OCI-LY7 (cell line): ENCODE measurements at regions of chr1 and their contacts with region 1.

Region 1: GRCh38 chr1:107389410-107390396 is 248.9 kb downstream of the NTNG1 start:
- DNase-seq: peak; percentile 35
- H3K4me3 ChIP-seq: no peak overlapping the region
- H3K27ac ChIP-seq: no peak overlapping the region
- H3K4me1 ChIP-seq: peaks cover 19% of the 10 kb centered on the region
- CTCF ChIP-seq: no peak

Region 2: DNA sequence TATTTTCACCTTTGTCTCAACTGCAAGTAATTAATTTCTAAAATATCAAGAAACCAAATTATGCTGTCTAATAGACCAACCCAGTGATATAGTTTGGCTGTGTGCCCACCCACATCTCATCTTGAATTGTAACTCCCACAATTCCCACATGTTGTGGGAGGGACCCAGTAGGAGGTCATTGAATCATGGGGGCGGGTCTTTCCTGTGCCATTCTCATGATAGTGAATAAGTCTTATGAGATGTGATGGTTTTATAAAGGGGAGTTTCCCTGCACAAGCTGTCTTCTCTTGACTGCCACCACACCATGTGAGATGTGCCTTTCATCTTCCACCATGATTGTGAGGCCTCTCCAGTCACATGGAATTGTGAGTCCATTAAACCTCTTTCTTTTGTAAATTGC is 296.3 kb before region 1 on chr1:
- CTCF ChIA-PET with region 1: no interaction called
- POLR2A ChIA-PET with region 1: no interaction called
- intact Hi-C with region 1: no loop called
- DNase-seq: no peak
- H3K4me3 ChIP-seq: no peak overlapping the region
- H3K27ac ChIP-seq: no peak overlapping the region
- H3K4me1 ChIP-seq: no peaks in the 10 kb centered on the region
- CTCF ChIP-seq: no peak

Region 3: GRCh38 chr1:107342316-107342715 is 47.4 kb before region 1 on chr1:
- CTCF ChIA-PET with region 1: no interaction called
- POLR2A ChIA-PET with region 1: no interaction called
- intact Hi-C with region 1: no loop called
- DNase-seq: no peak
- H3K4me3 ChIP-seq: no peak overlapping the region
- H3K27ac ChIP-seq: no peak overlapping the region
- H3K4me1 ChIP-seq: no peaks in the 10 kb centered on the region
- CTCF ChIP-seq: no peak

Region 4: GRCh38 chr1:107378527-107379270 is 11.0 kb before region 1 on chr1:
- CTCF ChIA-PET with region 1: interaction called, 6 read pairs
- POLR2A ChIA-PET with region 1: interaction called, 12 read pairs
- intact Hi-C with region 1: no loop called
- DNase-seq: no peak
- H3K4me3 ChIP-seq: no peak overlapping the region
- H3K27ac ChIP-seq: no peak overlapping the region
- H3K4me1 ChIP-seq: peaks cover 9% of the 10 kb centered on the region
- CTCF ChIP-seq: no peak

Region 5: GRCh38 chr1:107762751-107763390 is 373.2 kb after region 1 on chr1:
- CTCF ChIA-PET with region 1: no interaction called
- POLR2A ChIA-PET with region 1: no interaction called
- intact Hi-C with region 1: no loop called
- DNase-seq: no peak
- H3K4me3 ChIP-seq: no peak overlapping the region
- H3K27ac ChIP-seq: no peak overlapping the region
- H3K4me1 ChIP-seq: no peaks in the 10 kb centered on the region
- CTCF ChIP-seq: no peak

Region 6: DNA sequence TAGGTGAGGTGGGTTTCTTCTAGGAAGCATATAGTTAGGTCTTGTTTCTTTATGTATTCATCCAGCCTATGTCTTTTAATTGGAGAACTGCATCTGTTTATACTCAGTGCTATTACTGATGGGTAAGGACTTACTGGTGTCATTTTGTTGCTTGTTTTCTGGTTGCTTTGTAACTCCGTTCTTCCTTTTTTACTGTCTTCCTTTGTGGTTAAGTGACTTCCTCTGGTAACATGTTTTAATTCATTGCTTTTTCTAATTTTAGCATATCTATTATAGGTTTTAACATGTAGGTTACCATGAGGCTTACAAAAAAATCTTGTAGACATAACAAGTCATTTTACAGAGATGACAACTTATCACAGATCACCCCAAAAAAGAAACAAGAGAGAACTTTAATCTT is 414.4 kb after region 1 on chr1:
- CTCF ChIA-PET with region 1: no interaction called
- POLR2A ChIA-PET with region 1: no interaction called
- intact Hi-C with region 1: no loop called
- DNase-seq: peak; percentile 64
- H3K4me3 ChIP-seq: peak overlapping the region; percentile 46
- H3K27ac ChIP-seq: peak overlapping the region; percentile 52
- H3K4me1 ChIP-seq: peaks cover 41% of the 10 kb centered on the region
- CTCF ChIP-seq: no peak